ENCODE measurements at regions of chr7 and their contacts with region 1.

Region 1: GRCh38 chr7:22841954-22842353 is 19.3 kb upstream of the TOMM7 start:
- DNase-seq: no peak
- ATAC-seq: no peak
- H3K4me3 ChIP-seq: no peak overlapping the region
- H3K27ac ChIP-seq: no peak overlapping the region
- H3K4me1 ChIP-seq: no peaks in the 10 kb centered on the region; the same call in 1 of the 2 replicates
- H3K27me3 ChIP-seq: no peaks in the 10 kb centered on the region
- CTCF ChIP-seq: no peak

Region 2: DNA sequence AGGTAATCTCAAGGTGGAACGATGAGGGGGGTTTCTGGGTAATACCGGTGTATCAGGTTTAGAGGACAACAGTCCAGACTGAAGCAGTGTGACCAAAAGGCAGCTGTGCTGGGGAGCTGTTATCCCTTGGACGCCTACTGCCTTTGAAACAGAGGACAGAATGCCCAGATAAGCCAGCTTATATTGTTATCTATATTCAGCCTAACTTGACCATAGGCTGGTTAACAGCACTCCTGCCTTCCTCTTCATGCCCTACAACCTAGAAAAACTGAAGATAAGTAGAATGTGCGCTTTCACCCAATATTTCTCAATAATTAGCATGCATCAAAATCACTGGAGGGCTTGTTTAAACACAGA is 70.1 kb before region 1 on chr7:
- CTCF ChIA-PET with region 1: no interaction called
- POLR2A ChIA-PET with region 1: no interaction called
- in situ Hi-C with region 1: no loop called
- intact Hi-C with region 1: no loop called
- DNase-seq: no peak
- ATAC-seq: no peak
- H3K4me3 ChIP-seq: no peak overlapping the region
- H3K27ac ChIP-seq: no peak overlapping the region
- H3K4me1 ChIP-seq: no peaks in the 10 kb centered on the region
- H3K27me3 ChIP-seq: no peaks in the 10 kb centered on the region
- CTCF ChIP-seq: no peak

Region 3: GRCh38 chr7:22854158-22855048 is 12.4 kb after region 1 on chr7:
- CTCF ChIA-PET with region 1: no interaction called
- POLR2A ChIA-PET with region 1: interaction called, 12 read pairs
- in situ Hi-C with region 1: no loop called
- intact Hi-C with region 1: no loop called
- DNase-seq: no peak
- ATAC-seq: peak; percentile 90
- H3K4me3 ChIP-seq: peak overlapping the region; percentile 86 to 97
- H3K27ac ChIP-seq: peak overlapping the region; percentile 98
- H3K4me1 ChIP-seq: peaks cover 36% of the 10 kb centered on the region
- H3K27me3 ChIP-seq: no peaks in the 10 kb centered on the region
- CTCF ChIP-seq: no peak; the same call in none of the 2 replicates